Mucosa of descending colon (tissue), 3 donors: ENCODE measurements at regions of chr22 and their contacts with region 1.

Region 1: GRCh38 chr22:46563381-46564083 is 26.1 kb upstream of the CELSR1 start:
- DNase-seq: peak; percentile 87 to 96 (median 95)
- ATAC-seq: peak; percentile 94
- H3K4me3 ChIP-seq: no peak overlapping the region
- H3K4me1 ChIP-seq: peaks cover 11% of the 10 kb centered on the region
- CTCF ChIP-seq: peak; percentile 72

Region 2: DNA sequence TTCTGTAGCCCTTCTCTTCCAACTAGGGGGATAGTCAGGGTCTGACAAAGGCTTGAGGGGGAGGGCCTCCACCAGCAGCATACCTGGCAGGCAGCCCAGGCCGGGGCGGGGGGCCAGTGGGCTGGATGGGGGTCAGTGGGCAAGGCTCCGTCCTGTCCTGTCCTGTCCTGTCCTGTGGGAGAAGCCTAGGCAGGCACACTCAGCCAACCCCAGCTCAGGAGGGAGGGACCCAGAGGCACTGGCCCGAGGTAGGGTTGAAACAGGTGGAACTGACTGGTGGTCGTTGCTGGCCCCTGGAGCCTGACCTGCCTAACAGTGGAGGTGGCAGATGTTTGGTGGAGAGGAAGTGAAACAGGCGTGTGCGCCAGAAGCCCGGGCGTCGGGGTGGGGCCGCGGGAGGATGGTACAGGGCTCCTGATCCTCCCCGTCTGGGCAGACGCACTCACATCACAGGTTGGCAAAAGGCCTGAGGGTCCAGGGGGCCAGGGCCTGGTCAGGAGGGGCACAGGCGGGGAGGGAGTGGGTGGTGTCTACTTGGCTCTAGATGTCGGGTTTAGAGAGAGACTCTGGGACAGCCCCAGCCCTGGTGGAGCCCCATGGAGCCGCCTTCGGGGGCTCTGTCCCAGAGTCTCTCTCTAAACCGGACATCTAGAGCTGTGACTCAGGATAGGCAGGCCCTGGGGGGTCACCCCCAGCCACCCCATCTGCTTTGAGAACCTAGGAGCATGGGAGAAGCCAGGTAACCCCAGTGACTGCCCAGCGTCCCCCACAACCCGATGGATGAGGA is 24.2 kb after region 1 on chr22:
- intact Hi-C with region 1: loop called in 1 of 2 experiments (anchors 1 kb)
- DNase-seq: peak; percentile 79 to 90 (median 83)
- ATAC-seq: peak; percentile 82
- H3K4me3 ChIP-seq: no peak overlapping the region
- H3K4me1 ChIP-seq: peaks cover 58% of the 10 kb centered on the region
- CTCF ChIP-seq: no peak